H1 (cell line): ENCODE measurements at regions of chr1 and their contacts with region 1.

Region 1: DNA sequence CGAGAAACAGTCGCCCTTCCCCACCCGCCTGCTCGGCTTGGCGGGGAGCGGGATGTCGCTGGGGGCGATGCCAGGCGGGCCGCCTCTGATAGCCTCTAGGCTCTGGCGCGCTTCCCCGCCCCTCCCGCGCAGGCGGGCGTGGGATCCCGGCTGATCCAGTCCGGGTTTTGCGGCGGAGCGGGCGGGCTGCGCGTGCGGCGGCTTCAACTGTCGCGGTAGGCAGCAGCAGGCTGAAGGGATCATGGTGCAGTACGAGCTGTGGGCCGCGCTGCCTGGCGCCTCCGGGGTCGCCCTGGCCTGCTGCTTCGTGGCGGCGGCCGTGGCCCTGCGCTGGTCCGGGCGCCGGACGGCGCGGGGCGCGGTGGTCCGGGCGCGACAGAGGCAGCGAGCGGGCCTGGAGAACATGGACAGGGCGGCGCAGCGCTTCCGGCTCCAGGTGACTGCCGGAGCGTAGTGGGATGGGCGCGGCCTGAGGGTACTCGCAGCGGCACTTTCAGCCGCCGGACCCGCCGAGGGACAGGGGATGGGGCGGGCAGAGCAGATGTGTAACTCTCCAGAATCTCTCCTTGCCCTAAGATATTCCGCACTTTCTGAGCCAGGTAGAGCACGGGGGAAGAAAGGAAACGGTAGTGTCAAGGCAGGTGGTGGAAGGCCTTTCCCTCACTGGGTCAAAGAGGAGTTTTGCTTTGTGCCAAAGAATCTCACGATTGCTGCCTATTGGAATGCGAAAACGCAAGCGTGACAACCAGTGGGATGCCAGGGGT is at the start of gene FAAH:
- DNase-seq: peak in 1 of 2 experiments; percentile 94
- H3K4me3 ChIP-seq: peak within 1 kb of the TSS; percentile 74 to 92 (median 81)
- H3K27ac ChIP-seq: peak within 1 kb of the TSS; percentile 69
- H3K4me1 ChIP-seq: peaks cover 0 to 12% (median 6%) of the 10 kb centered on the region in 4 experiments; a peak in 5 of 7 replicates
- H3K27me3 ChIP-seq: peaks cover 0 to 2% (median under 1%) of the 10 kb centered on the region in 4 experiments; a peak in 2 of 7 replicates
- CTCF ChIP-seq: no peak
- EP300 ChIP-seq: no peak
- POLR2A ChIP-seq: peak in 1 of 2 experiments; percentile 43; a peak in 1 of 3 replicates
- RAD21 ChIP-seq: no peak
- total RNA-seq, gene FAAH: 43.5 and 47.3 TPM in 2 replicates

Region 2: GRCh38 chr1:46379996-46380395 is 14.3 kb before region 1 on chr1:
- CTCF ChIA-PET with region 1: interaction called, 3 read pairs
- POLR2A ChIA-PET with region 1: interaction called, 10 read pairs
- DNase-seq: no peak
- H3K4me3 ChIP-seq: no peak overlapping the region
- H3K27ac ChIP-seq: no peak overlapping the region
- H3K4me1 ChIP-seq: peaks cover 0 to 6% (median 1%) of the 10 kb centered on the region in 4 experiments; a peak in 2 of 7 replicates
- H3K27me3 ChIP-seq: no peaks in the 10 kb centered on the region
- CTCF ChIP-seq: no peak
- EP300 ChIP-seq: no peak
- POLR2A ChIP-seq: no peak
- RAD21 ChIP-seq: no peak